Psoas muscle (tissue), 8 donors: ENCODE measurements at regions of chr17 and their contacts with region 1.

Region 1: GRCh38 chr17:69344939-69345338 is 18.0 kb upstream of the ABCA5 start:
- DNase-seq: no peak
- ATAC-seq: peak in 3 of 4 donors; percentile 11 to 47 (median 36)
- H3K4me3 ChIP-seq: no peak overlapping the region
- H3K27ac ChIP-seq: peak overlapping the region; percentile 90
- H3K4me1 ChIP-seq: peaks cover 28% of the 10 kb centered on the region
- H3K27me3 ChIP-seq: no peaks in the 10 kb centered on the region
- CTCF ChIP-seq: no peak

Region 2: GRCh38 chr17:69414408-69415274 is 69.7 kb after region 1 on chr17 and contains the start of gene MAP2K6:
- intact Hi-C with region 1: loop called in 1 of 2 experiments (anchors 5 kb)
- DNase-seq: peak; percentile 83 to 92
- ATAC-seq: peak; percentile 91 to 94 (median 94)
- H3K4me3 ChIP-seq: peak within 1 kb of the TSS; percentile 76
- H3K27ac ChIP-seq: peak within 1 kb of the TSS; percentile 91
- H3K4me1 ChIP-seq: peaks cover 41% of the 10 kb centered on the region
- H3K27me3 ChIP-seq: no peaks in the 10 kb centered on the region
- CTCF ChIP-seq: no peak
- total RNA-seq, gene MAP2K6: 32.1 to 102 (median 46.3) TPM